K562 (cell line): ENCODE measurements at regions of chr1 and their contacts with region 1.

Region 1: DNA sequence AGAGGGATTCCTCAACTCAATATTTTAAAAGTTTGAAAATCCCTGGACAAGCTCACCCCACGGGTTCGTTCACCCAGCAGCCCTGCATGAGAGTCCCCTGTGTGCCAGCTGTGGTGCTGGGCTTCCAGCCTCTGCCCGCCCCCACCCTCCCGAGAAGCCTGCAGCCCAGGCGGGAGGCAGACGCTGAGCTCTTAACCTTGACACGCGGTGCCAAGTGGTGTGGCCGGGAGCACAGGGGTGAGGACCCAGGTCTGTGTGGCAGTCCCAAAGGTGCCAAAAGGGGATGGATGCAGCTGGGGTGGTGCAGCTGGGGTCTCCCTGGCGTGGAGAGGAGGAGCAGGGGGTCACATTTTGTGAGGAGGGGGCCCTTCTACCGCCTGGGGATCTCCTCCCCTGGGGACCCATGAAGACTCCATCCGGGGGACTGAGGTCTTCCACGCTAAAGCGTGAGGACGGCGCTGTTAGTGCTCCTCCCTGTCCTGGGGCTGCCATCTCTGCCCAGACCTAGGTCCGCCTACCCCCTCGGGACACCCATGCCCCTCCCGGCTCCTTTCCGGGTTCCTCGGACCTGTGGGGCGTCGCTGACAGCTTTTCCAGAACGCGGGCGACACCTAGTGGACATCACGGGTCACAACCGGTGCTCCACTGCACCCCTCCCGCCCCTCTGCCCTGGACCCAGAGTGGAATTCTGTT is 12.9 kb downstream of the PLA2G2F start:
- DNase-seq: peak; percentile 88 to 98 (median 96)
- ATAC-seq: peak; percentile 98
- H3K4me3 ChIP-seq: peak overlapping the region; percentile 12; the same call in 1 of the 2 replicates
- H3K27ac ChIP-seq: no peak overlapping the region
- H3K4me1 ChIP-seq: peaks cover 0 to 26% of the 10 kb centered on the region in 2 experiments; a peak in 3 of 5 replicates
- H3K27me3 ChIP-seq: peaks cover 0 to 19% of the 10 kb centered on the region in 2 experiments; a peak in 2 of 5 replicates
- CTCF ChIP-seq: peak; percentile 94 to 95 (median 95)
- EP300 ChIP-seq: no peak
- POLR2A ChIP-seq: no peak
- RAD21 ChIP-seq: peak; percentile 96 to 98

Region 2: DNA sequence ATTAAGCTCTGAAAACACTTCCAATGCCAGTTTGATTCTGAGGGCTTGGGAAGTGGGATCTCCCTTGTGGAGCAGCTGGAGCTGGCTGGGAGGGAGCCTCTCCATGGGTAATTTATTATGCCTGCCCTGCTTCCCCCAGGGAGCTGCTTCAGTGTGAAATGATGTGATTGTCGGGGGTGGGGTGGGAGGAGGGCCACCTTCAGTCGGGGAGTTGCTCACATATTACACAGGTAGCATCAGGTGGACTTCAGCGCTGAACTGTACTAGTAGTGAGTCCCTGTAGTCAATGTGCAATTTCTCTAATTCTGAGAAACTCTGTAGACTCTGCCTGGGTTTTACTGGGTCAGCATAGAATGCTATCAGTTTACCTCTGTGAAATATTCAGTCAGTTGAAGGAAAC is 241.4 kb before region 1 on chr1:
- CTCF ChIA-PET with region 1: no interaction called
- POLR2A ChIA-PET with region 1: no interaction called
- in situ Hi-C with region 1: loop called (anchors 5 kb)
- intact Hi-C with region 1: no loop called
- DNase-seq: no peak
- ATAC-seq: no peak
- H3K4me3 ChIP-seq: no peak overlapping the region
- H3K27ac ChIP-seq: no peak overlapping the region
- H3K4me1 ChIP-seq: no peaks in the 10 kb centered on the region
- H3K27me3 ChIP-seq: no peaks in the 10 kb centered on the region
- CTCF ChIP-seq: no peak
- EP300 ChIP-seq: no peak
- POLR2A ChIP-seq: no peak
- RAD21 ChIP-seq: no peak

Region 3: GRCh38 chr1:19918057-19918456 is 234.0 kb before region 1 on chr1:
- CTCF ChIA-PET with region 1: interaction called, 24 read pairs
- POLR2A ChIA-PET with region 1: interaction called, 3 read pairs
- in situ Hi-C with region 1: loop called (anchors 5 kb)
- intact Hi-C with region 1: loop called (anchors 1 kb)
- DNase-seq: peak; percentile 85 to 90 (median 86)
- ATAC-seq: peak; percentile 89
- H3K4me3 ChIP-seq: no peak overlapping the region
- H3K27ac ChIP-seq: no peak overlapping the region
- H3K4me1 ChIP-seq: peaks cover 0 to 6% of the 10 kb centered on the region in 2 experiments; a peak in 2 of 5 replicates
- H3K27me3 ChIP-seq: peaks cover 9 to 32% of the 10 kb centered on the region in 2 experiments; a peak in 4 of 5 replicates
- CTCF ChIP-seq: peak; percentile 94 to 97 (median 95)
- EP300 ChIP-seq: no peak
- POLR2A ChIP-seq: no peak
- RAD21 ChIP-seq: peak; percentile 94 to 98

Region 4: GRCh38 chr1:19974822-19975416 is 177.1 kb before region 1 on chr1:
- CTCF ChIA-PET with region 1: interaction called, 23 read pairs
- POLR2A ChIA-PET with region 1: no interaction called
- in situ Hi-C with region 1: no loop called
- intact Hi-C with region 1: loop called (anchors 2 kb)
- DNase-seq: peak; percentile 60 to 69 (median 63)
- ATAC-seq: peak; percentile 88
- H3K4me3 ChIP-seq: no peak overlapping the region
- H3K27ac ChIP-seq: no peak overlapping the region
- H3K4me1 ChIP-seq: no peaks in the 10 kb centered on the region
- H3K27me3 ChIP-seq: peaks cover 2 to 40% of the 10 kb centered on the region in 2 experiments; a peak in 3 of 5 replicates
- CTCF ChIP-seq: peak; percentile 84 to 96 (median 90)
- EP300 ChIP-seq: no peak
- POLR2A ChIP-seq: no peak
- RAD21 ChIP-seq: peak; percentile 95 to 99

Region 5: GRCh38 chr1:20100632-20101355 is 51.3 kb before region 1 on chr1:
- CTCF ChIA-PET with region 1: interaction called, 17 read pairs
- POLR2A ChIA-PET with region 1: no interaction called
- in situ Hi-C with region 1: no loop called
- intact Hi-C with region 1: loop called (anchors 1 kb)
- DNase-seq: peak; percentile 43 to 64 (median 54)
- ATAC-seq: peak; percentile 96
- H3K4me3 ChIP-seq: no peak overlapping the region
- H3K27ac ChIP-seq: no peak overlapping the region
- H3K4me1 ChIP-seq: no peaks in the 10 kb centered on the region
- H3K27me3 ChIP-seq: peaks cover 3 to 15% of the 10 kb centered on the region in 2 experiments; a peak in 4 of 5 replicates
- CTCF ChIP-seq: peak; percentile 73 to 84 (median 80)
- EP300 ChIP-seq: no peak
- POLR2A ChIP-seq: no peak
- RAD21 ChIP-seq: peak; percentile 88 to 93

Region 6: DNA sequence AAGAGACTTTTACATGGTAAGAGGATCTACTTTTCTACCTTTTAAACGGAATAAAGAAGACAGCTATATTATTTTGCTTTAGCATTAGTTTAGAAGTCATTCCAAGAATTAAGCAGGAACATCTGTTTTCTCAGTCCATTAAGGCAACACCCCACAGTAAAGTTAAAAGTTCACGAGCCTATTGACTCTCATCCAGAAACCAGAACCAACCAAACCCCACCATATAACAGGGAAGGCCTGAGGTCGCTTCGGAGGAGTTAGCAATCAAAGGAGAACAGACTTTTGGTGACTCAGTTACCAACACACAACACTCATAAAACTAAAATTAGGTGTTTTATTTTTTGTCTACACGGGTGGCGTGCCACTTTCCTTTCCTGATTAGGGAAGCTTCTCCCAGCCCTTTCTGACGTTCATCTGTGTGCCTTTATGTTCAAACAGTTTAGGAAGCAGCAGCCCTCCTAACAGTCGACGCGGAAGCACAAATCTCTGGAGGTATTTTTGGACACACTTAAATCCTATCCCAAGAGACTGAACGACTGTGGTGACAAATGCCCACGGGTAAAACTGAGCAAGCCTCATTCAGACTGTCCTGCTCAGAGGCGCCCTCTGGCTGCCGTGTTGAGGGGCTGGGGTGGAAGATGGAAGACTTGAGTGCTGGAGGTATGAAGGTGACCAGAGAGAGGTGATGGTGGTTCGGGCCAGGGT is 42.9 kb after region 1 on chr1:
- CTCF ChIA-PET with region 1: no interaction called
- POLR2A ChIA-PET with region 1: no interaction called
- in situ Hi-C with region 1: no loop called
- intact Hi-C with region 1: no loop called
- DNase-seq: peak; percentile 78 to 90 (median 78)
- ATAC-seq: peak; percentile 83
- H3K4me3 ChIP-seq: no peak overlapping the region
- H3K27ac ChIP-seq: no peak overlapping the region
- H3K4me1 ChIP-seq: peaks cover 31 to 59% of the 10 kb centered on the region in 2 experiments
- H3K27me3 ChIP-seq: no peaks in the 10 kb centered on the region
- CTCF ChIP-seq: peak; percentile 92 to 99 (median 92)
- EP300 ChIP-seq: 0 out of 2 replicates have a peak, but pooled peaks have one; percentile 21
- POLR2A ChIP-seq: no peak
- RAD21 ChIP-seq: peak; percentile 63 to 89